ENCODE measurements at regions of chr6 and their contacts with region 1.

Region 1: DNA sequence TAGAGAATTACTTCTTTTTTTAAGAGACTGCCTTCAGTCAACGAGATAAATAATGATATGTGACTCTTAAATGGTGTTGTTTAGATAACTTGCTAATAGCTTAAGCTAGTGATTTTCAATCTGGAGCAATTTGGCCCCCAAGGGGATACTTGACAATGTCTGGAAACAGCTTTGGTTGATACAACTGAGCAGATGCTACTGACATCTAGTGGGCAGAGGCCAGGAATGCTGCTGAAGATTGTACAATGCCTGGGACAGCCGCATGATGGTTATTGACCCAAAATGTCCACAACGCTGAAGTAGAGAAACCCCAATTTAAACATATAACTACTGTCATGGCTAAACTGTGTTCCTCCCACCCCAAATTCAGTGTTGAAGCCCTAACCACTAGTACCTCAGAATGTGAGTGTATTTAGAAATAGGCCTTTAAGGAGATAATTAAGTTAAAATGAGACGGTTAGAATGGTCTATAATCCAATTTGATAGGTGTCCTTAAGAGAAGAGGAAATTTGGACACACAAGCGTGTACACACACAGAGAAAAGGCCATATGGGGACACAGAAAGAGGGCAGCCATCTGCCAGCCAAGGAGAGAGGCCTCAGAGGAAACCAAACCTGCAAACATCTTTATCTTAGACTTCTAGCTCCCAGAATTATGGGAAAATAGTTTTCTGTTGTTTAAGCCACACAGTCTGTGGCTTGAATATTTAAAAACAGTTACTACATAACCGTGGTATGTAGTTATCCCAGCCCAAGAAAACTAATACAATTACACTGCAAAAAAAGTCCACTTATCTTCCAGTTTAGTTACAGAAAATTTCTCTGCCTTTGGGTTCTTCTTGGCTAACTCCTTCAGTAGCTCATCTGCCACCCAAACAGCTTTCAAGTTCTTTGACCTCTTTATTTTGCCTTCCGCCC is 22.2 kb downstream of the RWDD2A start:
- DNase-seq: peak in 13 of 14 experiments; percentile 23 to 78 (median 42)
- ATAC-seq: peak; percentile 98
- H3K4me3 ChIP-seq: no peak overlapping the region
- H3K4me3 Mint-ChIP-seq: no peak overlapping the region
- H3K27ac ChIP-seq: no peak overlapping the region
- H3K27ac Mint-ChIP-seq: no peak overlapping the region
- H3K4me1 ChIP-seq: no peaks in the 10 kb centered on the region
- H3K4me1 Mint-ChIP-seq: no peaks in the 10 kb centered on the region
- H3K27me3 ChIP-seq: peaks cover 0 to 4% of the 10 kb centered on the region in 2 experiments
- H3K27me3 Mint-ChIP-seq: peaks cover 11% of the 10 kb centered on the region
- CTCF ChIP-seq: peak; percentile 83

Region 2: DNA sequence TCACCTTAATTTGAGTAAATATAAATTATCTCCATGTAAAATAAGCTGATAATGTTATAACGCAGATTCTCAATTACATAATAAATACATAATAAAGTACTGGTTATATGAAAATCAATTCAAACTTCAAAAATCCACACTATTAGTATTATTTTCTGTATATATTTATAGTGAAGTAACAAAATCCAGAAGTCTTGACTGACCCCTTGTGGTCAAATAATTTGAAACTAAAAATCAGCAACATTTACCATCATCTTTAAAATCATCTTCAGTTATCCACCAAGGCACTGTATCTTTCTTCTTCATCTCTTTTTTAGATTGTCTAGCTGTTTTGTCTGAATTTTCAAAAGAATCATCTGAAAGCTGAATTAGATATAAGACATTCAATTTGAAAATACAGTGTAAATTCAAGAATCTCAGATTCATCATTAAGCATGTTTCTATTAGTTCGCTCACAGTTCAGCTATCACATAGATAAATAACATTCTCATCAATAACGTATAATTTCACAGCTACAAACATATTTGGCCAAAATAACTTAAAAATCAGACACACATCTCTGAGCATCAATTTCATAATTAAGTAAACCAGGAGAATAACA is 1005.5 kb after region 1 on chr6:
- CTCF ChIA-PET with region 1: no interaction called
- POLR2A ChIA-PET with region 1: no interaction called
- intact Hi-C with region 1: loop called in 1 of 2 experiments (anchors 5 kb)
- DNase-seq: peak in 3 of 14 experiments; percentile 17 to 33 (median 32)
- ATAC-seq: no peak
- H3K4me3 ChIP-seq: no peak overlapping the region
- H3K4me3 Mint-ChIP-seq: no peak overlapping the region
- H3K27ac ChIP-seq: no peak overlapping the region
- H3K27ac Mint-ChIP-seq: no peak overlapping the region
- H3K4me1 ChIP-seq: no peaks in the 10 kb centered on the region
- H3K4me1 Mint-ChIP-seq: peaks cover 4% of the 10 kb centered on the region
- H3K27me3 ChIP-seq: no peaks in the 10 kb centered on the region
- H3K27me3 Mint-ChIP-seq: no peaks in the 10 kb centered on the region
- CTCF ChIP-seq: peak; percentile 67